ENCODE measurements at regions of chr13 and their contacts with region 1.

Region 1: DNA sequence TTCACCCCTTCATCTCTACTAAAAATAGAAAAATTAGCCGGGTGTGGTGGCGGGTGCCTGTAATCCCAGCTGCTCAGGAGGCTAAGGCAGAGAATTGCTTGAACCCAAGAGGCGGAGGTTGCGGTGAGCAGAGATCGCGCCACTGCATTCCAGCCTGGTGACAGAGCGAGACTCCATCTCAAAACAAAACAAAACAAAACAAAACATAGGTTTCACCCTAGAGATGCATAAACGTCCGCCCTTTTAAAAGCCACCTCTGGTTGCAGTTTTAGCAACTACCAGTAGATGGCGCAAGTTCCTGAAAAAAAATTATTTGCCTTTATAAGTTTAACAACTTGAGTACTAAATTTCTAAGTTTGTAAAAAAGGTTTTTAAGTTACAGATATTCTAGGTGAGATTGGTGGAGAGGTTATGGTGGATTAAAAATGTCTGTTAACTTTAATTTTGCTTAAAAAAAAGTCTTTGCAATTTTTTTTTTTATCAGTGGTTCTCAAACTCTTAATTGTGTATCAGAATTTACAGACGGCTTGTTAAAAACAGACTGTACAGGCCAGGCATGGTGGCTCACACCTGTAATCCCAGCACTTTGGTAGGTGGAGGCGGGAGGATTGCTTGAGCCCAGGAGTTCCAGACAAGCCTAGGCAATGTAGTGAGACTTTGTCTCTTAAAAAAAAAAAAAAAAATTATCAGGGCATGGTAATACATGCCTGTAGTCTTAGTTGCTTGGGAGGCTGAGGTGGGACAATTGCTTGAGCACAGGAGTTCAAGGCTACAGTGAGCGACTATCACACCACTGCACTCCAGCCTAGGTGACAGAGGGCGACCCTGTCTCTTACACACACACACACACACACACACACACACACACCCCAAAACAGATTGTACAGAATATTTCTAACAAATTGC is 42.1 kb downstream of the NAA16 start:
- DNase-seq: peak; percentile 53
- H3K4me3 Mint-ChIP-seq: no peak overlapping the region
- H3K27ac Mint-ChIP-seq: peak overlapping the region; percentile 64
- H3K4me1 Mint-ChIP-seq: peaks cover 40% of the 10 kb centered on the region
- H3K27me3 Mint-ChIP-seq: no peaks in the 10 kb centered on the region

Region 2: DNA sequence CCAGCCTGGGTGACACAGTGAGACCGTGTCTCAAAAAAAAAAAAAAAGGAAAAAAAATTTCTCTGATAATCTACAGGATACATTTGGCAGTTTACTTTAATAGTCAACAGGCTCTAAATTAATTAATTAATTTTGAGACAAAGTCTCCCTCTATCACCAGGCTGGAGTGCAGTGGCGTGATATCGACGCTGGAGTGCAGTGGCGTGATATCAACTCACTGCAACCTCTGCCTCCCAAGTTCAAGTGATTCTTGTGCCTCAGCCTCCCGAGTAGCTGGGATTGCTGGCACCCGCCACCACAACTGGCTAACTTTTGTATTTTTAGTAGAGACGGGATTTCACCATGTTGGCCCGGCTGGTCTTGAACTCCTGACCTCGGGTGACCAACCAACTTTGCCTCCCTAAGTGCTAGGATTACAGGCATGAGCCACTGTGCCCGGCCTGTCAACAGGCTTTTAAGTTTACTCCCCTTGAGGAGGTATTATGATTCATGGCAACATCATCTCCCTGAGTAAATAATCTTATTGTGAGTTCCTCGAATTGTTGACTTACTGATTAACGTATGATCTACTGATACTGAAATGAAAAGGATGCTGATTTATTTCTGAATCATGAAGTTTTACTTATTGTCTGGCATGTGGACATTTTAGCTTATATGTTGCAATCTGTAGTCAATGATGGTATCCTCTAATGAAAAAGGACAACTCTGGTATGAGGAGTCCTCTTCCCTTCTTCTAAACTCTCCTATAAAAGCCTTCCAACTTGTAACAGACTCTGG is 68.5 kb before region 1 on chr13:
- intact Hi-C with region 1: no loop called
- DNase-seq: no peak
- H3K4me3 Mint-ChIP-seq: no peak overlapping the region
- H3K27ac Mint-ChIP-seq: no peak overlapping the region
- H3K4me1 Mint-ChIP-seq: peaks cover 10% of the 10 kb centered on the region
- H3K27me3 Mint-ChIP-seq: no peaks in the 10 kb centered on the region

Region 3: DNA sequence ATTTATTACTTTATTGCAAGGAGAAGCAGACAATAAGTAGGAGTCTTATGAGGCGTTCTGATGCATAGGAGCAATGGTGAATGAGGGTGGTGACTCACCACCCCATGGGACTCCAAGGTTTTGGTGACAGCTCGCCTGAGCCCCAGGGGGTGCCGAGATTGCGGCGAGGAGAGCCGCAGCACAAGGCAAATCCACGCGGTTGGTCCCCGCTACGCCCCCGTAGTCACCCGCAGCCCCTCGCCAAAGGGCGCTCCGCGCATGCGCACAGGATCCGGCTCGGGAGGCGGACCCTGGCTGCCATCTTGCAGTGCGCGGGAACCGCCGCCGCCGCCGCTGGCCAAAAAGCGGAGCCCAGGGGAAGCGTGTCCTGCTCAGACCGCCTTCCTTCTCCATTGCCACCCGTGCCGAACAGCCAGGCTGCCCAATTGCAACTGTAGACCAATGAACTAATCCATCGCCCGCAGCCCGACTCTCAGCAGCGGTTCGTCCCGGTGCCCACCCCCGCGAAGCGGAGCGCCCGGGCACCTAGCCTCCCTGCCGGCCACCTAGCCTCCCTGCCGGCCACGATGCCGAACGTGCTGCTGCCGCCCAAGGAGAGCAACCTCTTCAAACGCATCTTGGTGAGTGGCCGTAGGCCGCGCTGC is 42.1 kb before region 1 on chr13 and contains the start of gene NAA16:
- intact Hi-C with region 1: loop called (anchors 1 kb)
- DNase-seq: peak; percentile 91
- H3K4me3 Mint-ChIP-seq: peak within 1 kb of the TSS; percentile 94
- H3K27ac Mint-ChIP-seq: peak within 1 kb of the TSS; percentile 89
- H3K4me1 Mint-ChIP-seq: peaks cover 29% of the 10 kb centered on the region
- H3K27me3 Mint-ChIP-seq: no peaks in the 10 kb centered on the region
- total RNA-seq, gene NAA16: 27.9 and 28.5 TPM in 2 replicates

Region 4: DNA sequence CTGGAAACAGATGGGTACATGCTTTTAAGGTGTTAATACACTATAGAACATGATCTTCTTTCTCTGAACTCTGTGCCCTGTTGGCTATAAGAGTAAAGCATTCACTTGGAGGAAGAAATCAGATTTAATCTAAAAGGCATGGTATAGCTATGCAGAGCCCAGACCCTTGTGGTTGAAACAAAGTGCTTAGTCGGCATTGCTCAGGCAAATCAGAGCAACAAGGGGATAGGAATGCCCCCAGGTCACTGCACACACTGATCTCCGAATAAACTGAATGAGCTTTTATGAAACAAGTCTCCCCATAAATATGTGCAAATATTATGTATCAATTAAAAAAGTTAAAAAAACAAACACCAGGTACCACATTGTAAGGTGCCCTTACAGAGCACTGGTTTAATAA is 52.2 kb after region 1 on chr13:
- intact Hi-C with region 1: no loop called
- DNase-seq: no peak
- H3K4me3 Mint-ChIP-seq: no peak overlapping the region
- H3K27ac Mint-ChIP-seq: no peak overlapping the region
- H3K4me1 Mint-ChIP-seq: no peaks in the 10 kb centered on the region
- H3K27me3 Mint-ChIP-seq: peaks cover 29% of the 10 kb centered on the region

Region 5: DNA sequence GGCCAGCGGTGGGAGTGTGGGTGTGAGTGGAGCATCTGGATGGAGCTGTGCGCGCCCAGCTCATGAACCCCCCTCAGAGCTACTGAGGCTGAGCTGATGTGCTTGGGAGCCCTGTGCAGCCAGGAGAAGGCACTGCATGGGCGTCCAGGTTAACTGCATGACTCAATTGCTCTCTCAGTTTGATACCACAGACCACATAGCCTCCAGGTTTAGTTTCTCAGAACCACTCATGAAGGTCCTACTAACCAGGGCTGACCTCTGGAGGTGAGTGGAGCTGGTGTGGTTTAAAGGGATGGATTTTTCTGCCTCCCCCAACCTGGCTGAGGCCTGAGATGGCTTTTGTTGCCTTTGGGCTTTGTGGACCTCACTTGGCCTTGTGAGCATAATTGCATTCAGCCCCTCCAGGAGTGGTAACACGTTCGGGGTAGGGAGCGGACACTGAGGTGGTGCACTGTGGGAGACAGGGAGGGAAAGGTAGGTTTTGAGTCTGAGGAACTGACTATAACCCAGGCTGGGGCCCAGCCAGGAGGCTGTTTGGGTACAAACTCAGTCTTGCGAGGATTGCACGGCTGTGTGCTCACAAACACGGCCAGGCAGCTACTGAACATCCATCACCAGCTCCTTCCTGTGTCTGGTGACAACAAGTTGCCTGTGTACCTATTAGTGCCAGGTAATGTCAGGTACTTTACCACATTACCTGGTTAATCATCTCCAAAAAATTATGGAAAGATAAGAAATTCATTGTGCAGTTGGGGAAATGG is 201.6 kb after region 1 on chr13:
- intact Hi-C with region 1: loop called (anchors 10 kb)
- DNase-seq: no peak
- H3K4me3 Mint-ChIP-seq: no peak overlapping the region
- H3K27ac Mint-ChIP-seq: no peak overlapping the region
- H3K4me1 Mint-ChIP-seq: peaks cover 9% of the 10 kb centered on the region
- H3K27me3 Mint-ChIP-seq: no peaks in the 10 kb centered on the region

Region 6: GRCh38 chr13:41916173-41916954 is 563.2 kb after region 1 on chr13:
- intact Hi-C with region 1: loop called (anchors 2 kb)
- DNase-seq: no peak
- H3K4me3 Mint-ChIP-seq: peak overlapping the region; percentile 71
- H3K27ac Mint-ChIP-seq: peak overlapping the region; percentile 93
- H3K4me1 Mint-ChIP-seq: peaks cover 53% of the 10 kb centered on the region
- H3K27me3 Mint-ChIP-seq: no peaks in the 10 kb centered on the region

Region 7: DNA sequence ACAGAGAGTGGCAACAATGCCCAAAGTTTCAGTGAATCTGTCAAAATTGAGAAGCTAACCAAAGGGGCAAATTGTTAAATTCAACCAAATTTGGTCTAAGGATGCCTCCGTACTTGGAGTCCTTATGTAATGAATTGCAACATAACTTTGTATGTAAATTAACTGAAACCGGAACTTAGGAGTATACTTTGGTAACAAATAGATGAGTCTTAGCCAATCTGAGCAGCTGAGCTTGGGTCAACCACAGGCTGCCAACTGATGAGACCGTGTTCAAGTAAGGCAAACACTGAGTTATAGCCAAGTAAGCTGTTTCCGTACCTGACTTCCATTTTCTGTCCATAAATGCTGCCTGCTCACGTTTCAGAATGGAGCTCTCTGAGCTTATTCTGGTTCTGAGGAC is 602.4 kb after region 1 on chr13:
- intact Hi-C with region 1: no loop called
- DNase-seq: no peak
- H3K4me3 Mint-ChIP-seq: no peak overlapping the region
- H3K27ac Mint-ChIP-seq: no peak overlapping the region
- H3K4me1 Mint-ChIP-seq: peaks cover 21% of the 10 kb centered on the region
- H3K27me3 Mint-ChIP-seq: no peaks in the 10 kb centered on the region

Region 8: GRCh38 chr13:42110410-42111155 is 757.4 kb after region 1 on chr13:
- intact Hi-C with region 1: loop called (anchors 2 kb)
- DNase-seq: no peak
- H3K4me3 Mint-ChIP-seq: no peak overlapping the region
- H3K27ac Mint-ChIP-seq: no peak overlapping the region
- H3K4me1 Mint-ChIP-seq: peaks cover 15% of the 10 kb centered on the region
- H3K27me3 Mint-ChIP-seq: no peaks in the 10 kb centered on the region